ENCODE measurements at regions of chr12 and their contacts with region 1.

Region 1: GRCh38 chr12:114476159-114476558 is 70.2 kb upstream of the TBX5 start:
- DNase-seq: peak; percentile 81
- H3K4me3 ChIP-seq: no peak overlapping the region
- H3K27ac ChIP-seq: no peak overlapping the region
- H3K4me1 ChIP-seq: peaks cover 4% of the 10 kb centered on the region; the same call in 1 of the 2 replicates
- H3K27me3 ChIP-seq: peaks cover 6% of the 10 kb centered on the region

Region 2: GRCh38 chr12:114403011-114403689 is 73.0 kb before region 1 on chr12:
- in situ Hi-C with region 1: loop called (anchors 10 kb)
- DNase-seq: peak; percentile 91
- H3K4me3 ChIP-seq: peak overlapping the region; percentile 91
- H3K27ac ChIP-seq: peak overlapping the region; percentile 95
- H3K4me1 ChIP-seq: peaks cover 33% of the 10 kb centered on the region
- H3K27me3 ChIP-seq: no peaks in the 10 kb centered on the region

Region 3: DNA sequence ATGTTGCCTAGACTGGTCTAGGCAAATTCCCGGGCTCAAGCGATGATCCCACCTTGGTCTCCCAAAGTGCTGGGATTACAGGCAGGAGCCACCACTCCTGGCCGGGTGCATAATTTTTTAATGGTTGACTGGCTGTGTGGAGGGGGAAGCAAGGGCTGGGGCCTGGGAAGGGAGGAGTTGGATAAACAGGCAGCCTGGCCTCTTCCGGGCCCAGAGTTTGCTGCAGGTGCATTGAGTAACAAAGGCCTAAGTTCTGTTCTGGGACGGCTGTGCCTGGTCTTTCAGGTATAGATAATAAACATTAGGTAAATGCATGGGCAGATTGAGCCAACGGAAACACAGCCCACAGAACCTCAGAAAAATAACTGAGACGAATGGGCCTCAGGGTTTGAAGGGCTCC is 399.2 kb after region 1 on chr12:
- in situ Hi-C with region 1: no loop called
- DNase-seq: no peak
- H3K4me3 ChIP-seq: no peak overlapping the region
- H3K27ac ChIP-seq: no peak overlapping the region
- H3K4me1 ChIP-seq: no peaks in the 10 kb centered on the region
- H3K27me3 ChIP-seq: no peaks in the 10 kb centered on the region

Region 4: GRCh38 chr12:114913871-114914801 is 438.0 kb after region 1 on chr12:
- in situ Hi-C with region 1: no loop called
- DNase-seq: peak; percentile 76
- H3K4me3 ChIP-seq: no peak overlapping the region
- H3K27ac ChIP-seq: no peak overlapping the region
- H3K4me1 ChIP-seq: peaks cover 49% of the 10 kb centered on the region
- H3K27me3 ChIP-seq: no peaks in the 10 kb centered on the region

Measured in GM23248 (cell line).